Activated naive CD8-positive, alpha-beta T cell treated with anti-CD3 and anti-CD28 coated beads, Interleukin-2, amount 10 ng/mL, durations not matched to agents 7 days and 5 days (primary cell): ENCODE measurements at regions of chr17 and their contacts with region 1.

Region 1: DNA sequence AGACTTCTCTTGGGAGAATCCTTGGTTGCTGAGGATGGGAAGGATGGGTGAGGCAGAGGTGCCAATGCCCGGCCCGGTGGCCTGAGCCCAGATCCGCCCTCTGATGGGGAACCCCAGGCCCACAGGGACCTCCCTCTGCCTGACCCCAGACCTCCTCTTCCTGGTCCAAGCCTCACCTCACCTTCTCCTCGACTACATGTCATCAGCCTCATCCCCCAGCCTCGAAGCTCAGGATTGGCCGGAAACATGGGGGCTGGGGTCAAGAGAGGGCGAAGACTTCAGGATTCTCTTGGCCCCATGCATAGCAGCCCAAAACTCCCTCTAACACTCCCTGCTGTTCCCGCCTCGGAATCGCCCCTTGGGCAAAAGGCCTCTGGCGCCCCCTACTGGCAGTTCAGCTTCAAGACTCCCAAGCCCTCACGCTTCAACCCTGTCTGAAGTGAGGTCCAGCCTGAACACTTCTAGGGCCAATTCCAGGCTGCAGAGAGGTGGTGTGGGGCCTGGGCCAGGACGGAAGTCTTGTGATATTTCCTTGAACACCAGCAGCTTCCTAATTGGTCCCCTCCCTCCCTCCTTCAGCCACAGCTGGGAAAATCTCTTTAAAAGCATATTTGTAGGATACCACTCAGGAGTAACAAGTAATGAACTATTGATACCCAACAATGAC is 47.2 kb downstream of the ARHGAP27 start:
- DNase-seq: peak; percentile 90
- ATAC-seq: peak; percentile 89
- H3K4me3 Mint-ChIP-seq: peak overlapping the region; percentile 12
- H3K27ac Mint-ChIP-seq: peak overlapping the region; percentile 72
- H3K4me1 Mint-ChIP-seq: peaks cover 34% of the 10 kb centered on the region
- H3K27me3 Mint-ChIP-seq: peaks cover 12% of the 10 kb centered on the region

Region 2: GRCh38 chr17:45073414-45074070 is 311.9 kb before region 1 on chr17:
- POLR2A ChIA-PET with region 1: no interaction called
- DNase-seq: no peak
- ATAC-seq: no peak
- H3K4me3 Mint-ChIP-seq: no peak overlapping the region
- H3K27ac Mint-ChIP-seq: peak overlapping the region; percentile 25
- H3K4me1 Mint-ChIP-seq: peaks cover 18% of the 10 kb centered on the region
- H3K27me3 Mint-ChIP-seq: no peaks in the 10 kb centered on the region

Region 3: GRCh38 chr17:45218895-45219661 is 166.4 kb before region 1 on chr17:
- POLR2A ChIA-PET with region 1: interaction called, 16 read pairs
- DNase-seq: peak; percentile 88
- ATAC-seq: no peak
- H3K4me3 Mint-ChIP-seq: peak overlapping the region; percentile 95
- H3K27ac Mint-ChIP-seq: peak overlapping the region; percentile 62
- H3K4me1 Mint-ChIP-seq: peaks cover 33% of the 10 kb centered on the region
- H3K27me3 Mint-ChIP-seq: no peaks in the 10 kb centered on the region

Region 4: DNA sequence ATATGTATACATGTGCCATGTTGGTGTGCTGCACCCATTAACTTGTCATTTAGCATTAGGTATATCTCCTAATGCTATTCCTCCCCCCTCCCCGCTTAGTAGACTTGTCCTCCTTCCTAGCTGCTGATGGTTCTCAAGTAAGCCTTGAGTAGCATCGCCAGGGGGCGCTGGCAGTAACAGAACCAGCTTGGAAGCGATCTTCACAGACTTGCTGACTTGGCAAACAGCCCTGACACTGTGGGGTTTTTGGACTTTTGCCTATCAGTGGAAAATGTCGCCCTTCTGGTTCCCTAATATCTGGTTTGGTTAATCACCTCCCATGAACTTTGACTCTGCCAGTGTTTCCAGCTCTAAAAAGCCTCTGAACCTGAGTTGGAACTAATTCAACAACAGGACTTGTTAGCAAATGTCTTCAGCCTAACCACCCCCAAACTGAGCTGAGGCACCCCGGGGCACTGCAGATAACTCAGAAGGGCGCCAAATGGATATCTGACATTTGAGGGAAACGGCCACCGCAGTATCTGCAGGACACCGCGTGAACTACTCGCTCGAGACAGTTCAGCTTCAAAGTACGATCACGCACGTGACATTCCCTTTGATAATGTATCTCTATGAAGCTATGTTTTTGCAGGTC is 108.1 kb before region 1 on chr17:
- POLR2A ChIA-PET with region 1: interaction called, 13 read pairs
- DNase-seq: peak; percentile 88
- ATAC-seq: peak; percentile 93
- H3K4me3 Mint-ChIP-seq: no peak overlapping the region
- H3K27ac Mint-ChIP-seq: no peak overlapping the region
- H3K4me1 Mint-ChIP-seq: peaks cover 18% of the 10 kb centered on the region
- H3K27me3 Mint-ChIP-seq: no peaks in the 10 kb centered on the region